ENCODE measurements at regions of chr16 and their contacts with region 1.

Region 1: GRCh38 chr16:31873556-31874365 is at the start of gene ZNF267:
- DNase-seq: peak; percentile 88 to 94
- ATAC-seq: peak; percentile 97 to 98
- H3K4me3 ChIP-seq: peak within 1 kb of the TSS; percentile 77 to 98 (median 88)
- H3K27ac ChIP-seq: peak within 1 kb of the TSS; percentile 76 to 92 (median 84)
- H3K4me1 ChIP-seq: peaks cover 16 to 23% of the 10 kb centered on the region in 2 donors
- H3K27me3 ChIP-seq: no peaks in the 10 kb centered on the region
- CTCF ChIP-seq: no peak
- POLR2A ChIP-seq: peak; percentile 76 to 77
- total RNA-seq, gene ZNF267: 6.5 to 13.3 (median 8.2) TPM

Region 2: GRCh38 chr16:31010585-31011325 is 863.0 kb before region 1 on chr16 and contains the start of gene STX1B:
- in situ Hi-C with region 1: loop called in 1 of 4 experiments (anchors 25 kb)
- intact Hi-C with region 1: no loop called
- DNase-seq: no peak
- ATAC-seq: no peak
- H3K4me3 ChIP-seq: no peak within 1 kb of the TSS
- H3K27ac ChIP-seq: no peak within 1 kb of the TSS
- H3K4me1 ChIP-seq: no peaks in the 10 kb centered on the region
- H3K27me3 ChIP-seq: peaks cover 40 to 55% (median 50%) of the 10 kb centered on the region in 3 donors
- CTCF ChIP-seq: no peak
- POLR2A ChIP-seq: no peak
- total RNA-seq, gene STX1B: 0.13 to 0.36 TPM in 2 of 4 donors, not detected in the others

Region 3: GRCh38 chr16:31472709-31473203 is 401.0 kb before region 1 on chr16:
- in situ Hi-C with region 1: no loop called
- intact Hi-C with region 1: loop called (anchors 5 kb)
- DNase-seq: peak; percentile 60 to 81
- ATAC-seq: peak; percentile 79 to 82
- H3K4me3 ChIP-seq: peak overlapping the region; percentile 63 to 76 (median 67)
- H3K27ac ChIP-seq: peak overlapping the region; percentile 83 to 89 (median 87)
- H3K4me1 ChIP-seq: peaks cover 0 to 11% of the 10 kb centered on the region in 2 donors
- H3K27me3 ChIP-seq: peaks cover 4 to 21% (median 5%) of the 10 kb centered on the region in 3 donors
- CTCF ChIP-seq: peak; percentile 65 to 80 (median 68)
- POLR2A ChIP-seq: no peak

Region 4: GRCh38 chr16:31507929-31508705 is 365.6 kb before region 1 on chr16 and contains the start of gene RUSF1:
- in situ Hi-C with region 1: loop called in 3 of 4 experiments (anchors 25 kb)
- intact Hi-C with region 1: loop called (anchors 10 kb)
- DNase-seq: peak; percentile 86 to 88
- ATAC-seq: peak; percentile 94 to 95
- H3K4me3 ChIP-seq: peak within 1 kb of the TSS; percentile 74 to 98 (median 87)
- H3K27ac ChIP-seq: peak within 1 kb of the TSS; percentile 88 to 93 (median 91)
- H3K4me1 ChIP-seq: peaks cover 24 to 28% of the 10 kb centered on the region in 2 donors
- H3K27me3 ChIP-seq: no peaks in the 10 kb centered on the region
- CTCF ChIP-seq: peak in 1 of 5 experiments; percentile 12
- POLR2A ChIP-seq: peak; percentile 86 to 89
- total RNA-seq, gene RUSF1: 6.7 to 15.1 (median 8.5) TPM